ENCODE measurements at regions of chr20 and their contacts with region 1.

Region 1: DNA sequence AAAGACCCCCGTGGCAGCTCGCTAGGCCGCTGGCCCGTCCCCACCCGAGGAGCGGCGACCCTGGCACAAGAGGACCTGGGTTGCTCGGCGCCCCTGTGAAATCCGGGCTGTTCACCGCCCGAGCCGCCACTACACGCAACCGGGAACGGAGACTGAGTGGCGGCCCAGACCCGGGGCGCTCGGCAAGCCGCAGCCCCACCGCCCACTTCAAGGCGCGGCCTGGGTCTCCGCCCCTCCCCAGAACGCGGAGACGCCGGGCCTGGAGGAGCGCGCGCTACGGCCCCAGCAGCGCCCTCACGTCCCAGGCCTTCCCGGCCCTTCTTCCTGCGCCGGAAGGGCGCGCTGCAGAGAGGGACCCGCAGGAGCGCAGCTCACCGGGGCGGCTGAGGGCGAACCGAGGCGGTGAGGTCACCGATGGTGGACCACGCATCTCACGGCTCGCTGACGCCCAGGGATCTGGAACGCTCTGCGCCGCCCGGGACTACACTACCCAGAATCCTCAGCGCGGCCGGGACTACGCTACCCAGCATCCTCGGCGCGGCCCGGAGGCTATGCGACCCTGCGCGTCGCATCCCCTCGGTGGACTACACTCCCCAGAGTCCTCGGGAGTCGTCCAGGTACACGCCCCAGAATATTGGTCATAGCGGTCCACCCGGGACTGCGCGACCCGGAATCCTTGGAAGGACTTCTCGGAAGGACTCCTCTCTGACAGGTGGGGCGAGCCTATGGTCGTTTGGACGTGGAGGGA is at the start of gene ZNF337:
- DNase-seq: peak; percentile 85 to 98
- H3K4me3 ChIP-seq: peak within 1 kb of the TSS; percentile 74 to 82
- H3K27ac ChIP-seq: peak within 1 kb of the TSS; percentile 92 to 93
- H3K4me1 ChIP-seq: peaks cover 4 to 9% of the 10 kb centered on the region in 2 donors
- H3K27me3 ChIP-seq: no peaks in the 10 kb centered on the region
- CTCF ChIP-seq: peak in 2 of 3 experiments; percentile 27 to 31
- total RNA-seq, gene ZNF337: 3.4 TPM

Region 2: DNA sequence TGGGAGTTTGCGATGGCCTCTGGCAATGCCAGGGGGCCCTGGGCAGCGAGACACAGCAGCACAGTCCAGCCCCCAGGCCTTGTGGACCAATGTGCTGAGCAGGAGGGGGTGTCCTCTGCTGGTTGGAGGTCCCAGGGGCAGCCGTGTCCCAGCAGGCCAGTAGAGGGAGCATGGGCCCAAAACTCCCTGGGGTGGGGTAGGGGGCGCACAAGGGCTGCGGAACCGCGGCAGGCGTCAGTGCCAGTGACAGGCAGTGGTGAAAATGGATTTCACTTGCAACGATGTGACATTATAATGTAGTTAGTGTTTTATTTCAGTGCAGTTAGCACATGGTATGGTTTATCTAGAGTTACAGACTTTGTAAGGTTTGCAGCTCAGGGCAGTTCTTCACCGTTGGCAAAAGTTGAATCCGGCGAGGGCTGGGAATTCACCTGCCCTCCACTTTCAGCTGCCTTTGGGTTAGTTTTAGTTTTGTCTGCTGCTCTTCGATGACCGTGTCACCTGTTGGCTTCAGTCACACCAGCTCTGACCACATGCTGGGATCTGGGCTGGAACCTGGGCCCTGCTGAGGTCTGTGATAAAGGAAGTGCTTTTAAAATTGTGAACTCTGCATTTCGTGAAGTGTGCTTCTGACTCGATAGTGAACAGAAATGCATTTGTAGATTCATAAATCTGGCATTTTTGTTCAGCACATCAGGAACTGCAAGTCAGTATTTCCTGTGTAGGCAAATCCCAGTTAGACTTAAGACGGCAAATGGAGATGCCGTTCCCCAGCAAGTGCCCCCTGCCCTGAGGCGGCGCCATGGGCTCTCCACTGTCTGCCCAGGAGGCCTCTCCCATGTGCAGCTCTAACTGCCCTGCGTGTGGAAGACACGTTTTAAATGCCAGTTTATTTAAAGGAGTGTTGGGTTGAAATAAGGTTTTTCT is 401.8 kb before region 1 on chr20:
- intact Hi-C with region 1: loop called (anchors 10 kb)
- DNase-seq: no peak
- H3K4me3 ChIP-seq: no peak overlapping the region
- H3K27ac ChIP-seq: peak overlapping the region; percentile 61 to 64
- H3K4me1 ChIP-seq: peaks cover 7 to 27% of the 10 kb centered on the region in 2 donors
- H3K27me3 ChIP-seq: no peaks in the 10 kb centered on the region
- CTCF ChIP-seq: peak; percentile 57 to 80 (median 66)

Region 3: GRCh38 chr20:25539742-25540672 is 156.6 kb before region 1 on chr20:
- intact Hi-C with region 1: loop called (anchors 5 kb)
- DNase-seq: no peak
- H3K4me3 ChIP-seq: peak overlapping the region; percentile 36 to 63
- H3K27ac ChIP-seq: peak overlapping the region; percentile 45 to 65
- H3K4me1 ChIP-seq: peaks cover 8 to 34% of the 10 kb centered on the region in 2 donors
- H3K27me3 ChIP-seq: no peaks in the 10 kb centered on the region
- CTCF ChIP-seq: peak; percentile 31 to 61 (median 42)

Region 4: DNA sequence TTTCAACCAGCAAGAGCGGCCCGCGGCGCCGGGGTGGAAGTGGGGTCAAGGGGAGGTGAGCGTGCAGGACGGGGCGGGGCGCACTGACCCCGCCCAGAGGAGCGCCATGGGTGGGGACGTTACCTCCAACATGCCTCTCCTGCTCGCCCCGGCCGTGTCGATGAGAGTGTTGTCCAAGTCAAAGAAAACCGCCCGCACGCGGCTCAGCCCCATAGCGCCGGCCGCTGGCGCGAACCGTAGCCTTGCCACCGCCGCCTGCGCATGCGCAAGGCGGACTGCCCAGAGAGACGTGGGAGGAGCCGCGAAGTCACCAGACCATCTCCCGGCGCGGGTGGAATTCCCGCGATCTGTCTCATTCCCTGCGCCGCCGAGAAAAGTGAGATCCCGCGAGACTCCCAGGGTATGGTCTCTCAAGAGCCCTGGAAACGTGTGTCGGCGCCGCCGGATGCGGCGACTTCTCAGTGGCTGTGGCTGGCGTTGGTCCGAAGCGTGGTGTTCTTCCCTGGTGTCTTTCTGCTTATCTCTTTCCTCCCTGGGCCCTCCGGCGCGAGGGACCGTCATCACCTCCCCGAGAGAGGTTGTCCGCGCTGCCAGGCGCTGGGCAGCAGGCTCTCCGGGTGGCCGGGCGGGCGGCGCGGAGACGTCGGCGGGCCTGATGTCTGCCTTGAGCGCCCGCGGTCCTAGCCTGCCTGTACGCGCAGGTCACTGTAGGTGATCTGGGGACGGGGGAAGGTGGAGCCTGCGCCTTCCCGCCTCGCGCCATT is 72.6 kb before region 1 on chr20 and contains the start of gene NANP:
- intact Hi-C with region 1: loop called (anchors 1 kb)
- DNase-seq: peak; percentile 95 to 99
- H3K4me3 ChIP-seq: peak within 1 kb of the TSS; percentile 88 to 95
- H3K27ac ChIP-seq: peak within 1 kb of the TSS; percentile 90 to 94
- H3K4me1 ChIP-seq: peaks cover 0 to 6% of the 10 kb centered on the region in 2 donors
- H3K27me3 ChIP-seq: no peaks in the 10 kb centered on the region
- CTCF ChIP-seq: no peak
- total RNA-seq, gene NANP: 2.6 TPM

Region 5: GRCh38 chr20:25669826-25670422 is 26.6 kb before region 1 on chr20:
- intact Hi-C with region 1: no loop called
- DNase-seq: no peak
- H3K4me3 ChIP-seq: no peak overlapping the region
- H3K27ac ChIP-seq: no peak overlapping the region
- H3K4me1 ChIP-seq: no peaks in the 10 kb centered on the region
- H3K27me3 ChIP-seq: no peaks in the 10 kb centered on the region
- CTCF ChIP-seq: no peak

Measured in ascending aorta (tissue), 2 donors.